Breast epithelium (tissue), 4 donors: ENCODE measurements at regions of chr5 and their contacts with region 1.

Region 1: DNA sequence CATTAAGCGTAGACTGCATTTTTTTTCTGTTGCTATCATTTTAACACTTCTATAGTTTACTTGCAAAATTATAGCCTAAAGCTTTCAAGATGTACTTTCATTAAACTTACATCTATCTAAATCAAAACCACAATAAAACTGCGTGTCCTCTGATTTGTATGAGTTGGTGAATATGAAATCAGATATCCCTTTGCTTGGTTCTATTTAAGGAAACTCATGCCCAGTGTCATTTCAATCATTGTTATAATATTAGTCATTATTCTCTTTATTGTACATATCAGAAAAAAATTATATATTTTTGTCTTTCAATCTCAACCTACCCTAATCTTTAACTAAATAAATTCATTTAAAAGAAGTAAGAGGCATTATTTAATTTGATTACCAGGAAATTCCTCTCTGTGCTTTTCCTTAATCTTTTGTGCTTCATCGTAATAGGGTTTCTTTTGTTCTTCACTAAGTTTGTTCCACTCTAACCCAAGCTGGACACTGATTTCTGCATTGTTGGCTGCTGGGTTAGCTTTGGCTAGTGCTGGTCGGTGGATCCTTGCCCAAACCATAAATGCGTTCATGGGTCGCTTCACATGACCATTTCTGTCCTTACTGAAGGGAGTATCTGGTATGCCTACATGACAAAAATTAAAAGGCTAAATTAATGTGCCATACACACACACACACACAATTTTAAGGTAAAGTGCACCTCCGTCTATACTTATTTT is 3.8 kb downstream of the SOX30 start:
- DNase-seq: no peak
- H3K4me3 ChIP-seq: no peak overlapping the region
- H3K27ac ChIP-seq: no peak overlapping the region
- H3K4me1 ChIP-seq: no peaks in the 10 kb centered on the region
- H3K27me3 ChIP-seq: no peaks in the 10 kb centered on the region
- CTCF ChIP-seq: no peak
- POLR2A ChIP-seq: no peak

Region 2: GRCh38 chr5:157308836-157309465 is 339.5 kb before region 1 on chr5:
- intact Hi-C with region 1: loop called (anchors 10 kb)
- DNase-seq: no peak
- H3K4me3 ChIP-seq: no peak overlapping the region
- H3K27ac ChIP-seq: no peak overlapping the region
- H3K4me1 ChIP-seq: no peaks in the 10 kb centered on the region
- H3K27me3 ChIP-seq: no peaks in the 10 kb centered on the region
- CTCF ChIP-seq: no peak
- POLR2A ChIP-seq: no peak